ENCODE measurements at regions of chr19 and their contacts with region 1.

Region 1: GRCh38 chr19:18281082-18282020 is at the start of gene JUND:
- DNase-seq: peak; percentile 98 to 99 (median 99)
- ATAC-seq: peak; percentile 77
- H3K4me3 ChIP-seq: peak within 1 kb of the TSS; percentile 91
- H3K4me3 Mint-ChIP-seq: peak within 1 kb of the TSS; percentile 91 to 98 (median 94)
- H3K27ac ChIP-seq: peak within 1 kb of the TSS; percentile 100
- H3K27ac Mint-ChIP-seq: peak within 1 kb of the TSS; percentile 96 to 99 (median 98)
- H3K4me1 ChIP-seq: peaks cover 26 to 45% of the 10 kb centered on the region in 2 donors
- H3K4me1 Mint-ChIP-seq: peaks cover 29 to 56% (median 50%) of the 10 kb centered on the region in 7 donors
- H3K27me3 ChIP-seq: no peaks in the 10 kb centered on the region
- H3K27me3 Mint-ChIP-seq: peaks cover 0 to 9% (median 0%) of the 10 kb centered on the region in 5 donors
- total RNA-seq, gene JUND: 196 to 1,360 (median 279) TPM

Region 2: DNA sequence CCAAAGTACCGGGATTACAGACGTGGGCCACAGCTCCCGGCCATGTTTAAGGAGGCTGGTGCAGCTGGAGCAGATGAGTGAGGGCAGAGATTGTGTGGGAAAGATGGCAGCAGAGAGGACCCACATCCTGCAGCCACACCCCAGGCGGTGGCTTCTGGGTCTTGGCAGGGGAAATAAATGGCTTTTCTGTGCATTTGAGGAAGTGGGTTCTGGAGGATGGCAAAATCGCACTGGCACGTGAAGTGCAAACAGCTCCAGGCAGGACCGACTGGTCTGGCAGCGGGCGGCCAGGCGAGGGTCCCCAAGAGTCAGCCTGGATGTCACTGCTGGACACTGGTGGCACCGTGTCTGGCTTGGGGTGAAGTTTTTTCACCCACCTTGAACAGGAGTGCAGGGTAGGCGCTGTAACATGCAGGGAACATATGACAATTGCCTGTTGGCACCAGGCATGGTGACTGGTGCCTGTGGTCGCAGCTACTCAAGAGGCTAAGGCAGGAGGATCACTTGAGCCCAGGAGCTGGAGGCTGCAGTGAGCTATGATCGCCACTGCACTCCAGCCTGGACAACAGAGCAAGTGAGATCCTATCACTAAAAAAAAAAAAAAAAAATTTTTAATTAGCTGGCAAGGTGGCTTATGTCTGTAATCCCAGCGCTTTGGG is 478.0 kb before region 1 on chr19:
- CTCF ChIA-PET with region 1: no interaction called
- POLR2A ChIA-PET with region 1: no interaction called
- intact Hi-C with region 1: no loop called
- DNase-seq: peak in 6 of 9 donors; percentile 60 to 72 (median 69)
- ATAC-seq: peak; percentile 77
- H3K4me3 ChIP-seq: peak overlapping the region; percentile 38
- H3K4me3 Mint-ChIP-seq: peak overlapping the region; percentile 75 to 88 (median 82)
- H3K27ac ChIP-seq: peak overlapping the region; percentile 25
- H3K27ac Mint-ChIP-seq: peak overlapping the region; percentile 76 to 97 (median 88)
- H3K4me1 ChIP-seq: peaks cover 15 to 34% of the 10 kb centered on the region in 2 donors
- H3K4me1 Mint-ChIP-seq: peaks cover 19 to 55% (median 40%) of the 10 kb centered on the region in 7 donors
- H3K27me3 ChIP-seq: no peaks in the 10 kb centered on the region
- H3K27me3 Mint-ChIP-seq: peaks cover 0 to 12% (median 0%) of the 10 kb centered on the region in 5 donors

Region 3: DNA sequence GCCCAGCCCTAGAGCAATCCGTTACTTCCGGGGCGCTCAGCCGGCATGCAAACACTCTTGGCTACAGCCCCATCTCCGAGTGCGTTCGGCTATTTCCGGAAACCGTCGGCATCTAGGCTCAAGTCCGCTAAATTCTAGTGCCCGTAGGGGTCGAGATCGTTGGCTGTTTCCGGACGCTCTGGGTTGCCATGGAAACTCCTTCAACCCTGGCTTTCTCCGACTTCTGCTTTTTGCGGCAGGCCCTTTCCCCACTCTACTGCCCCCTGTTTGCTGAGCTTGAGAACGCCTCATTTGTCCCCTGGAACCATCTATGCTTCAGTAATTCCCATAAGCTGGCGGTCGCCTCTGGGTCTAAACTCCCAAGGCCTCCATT is 128.9 kb before region 1 on chr19:
- CTCF ChIA-PET with region 1: interaction called, 10 read pairs
- POLR2A ChIA-PET with region 1: interaction called, 12 read pairs
- intact Hi-C with region 1: loop called in 1 of 2 experiments (anchors 1 kb)
- DNase-seq: peak; percentile 92 to 99 (median 97)
- ATAC-seq: peak; percentile 76
- H3K4me3 ChIP-seq: peak overlapping the region; percentile 82
- H3K4me3 Mint-ChIP-seq: peak overlapping the region; percentile 81 to 95 (median 88)
- H3K27ac ChIP-seq: peak overlapping the region; percentile 88
- H3K27ac Mint-ChIP-seq: peak overlapping the region; percentile 89 to 97 (median 95)
- H3K4me1 ChIP-seq: peaks cover 16 to 20% of the 10 kb centered on the region in 2 donors
- H3K4me1 Mint-ChIP-seq: peaks cover 9 to 32% (median 24%) of the 10 kb centered on the region in 7 donors
- H3K27me3 ChIP-seq: no peaks in the 10 kb centered on the region
- H3K27me3 Mint-ChIP-seq: no peaks in the 10 kb centered on the region

Region 4: GRCh38 chr19:18291590-18292461 is 10.5 kb after region 1 on chr19:
- CTCF ChIA-PET with region 1: interaction called, 17 read pairs
- POLR2A ChIA-PET with region 1: interaction called, 216 read pairs
- intact Hi-C with region 1: loop called (anchors 1 kb)
- DNase-seq: peak in 8 of 9 donors; percentile 67 to 93 (median 70)
- ATAC-seq: peak; percentile 62
- H3K4me3 ChIP-seq: peak overlapping the region; percentile 84
- H3K4me3 Mint-ChIP-seq: peak overlapping the region; percentile 80 to 96 (median 92)
- H3K27ac ChIP-seq: peak overlapping the region; percentile 92
- H3K27ac Mint-ChIP-seq: peak overlapping the region; percentile 87 to 100 (median 97)
- H3K4me1 ChIP-seq: peaks cover 41 to 47% of the 10 kb centered on the region in 2 donors
- H3K4me1 Mint-ChIP-seq: peaks cover 38 to 73% (median 58%) of the 10 kb centered on the region in 7 donors
- H3K27me3 ChIP-seq: no peaks in the 10 kb centered on the region
- H3K27me3 Mint-ChIP-seq: no peaks in the 10 kb centered on the region

Region 5: GRCh38 chr19:18304458-18305310 is 23.3 kb after region 1 on chr19:
- CTCF ChIA-PET with region 1: interaction called, 73 read pairs
- POLR2A ChIA-PET with region 1: interaction called, 351 read pairs
- intact Hi-C with region 1: loop called (anchors 1 kb)
- DNase-seq: peak; percentile 47 to 85 (median 57)
- ATAC-seq: peak; percentile 84
- H3K4me3 ChIP-seq: peak overlapping the region; percentile 75
- H3K4me3 Mint-ChIP-seq: peak overlapping the region; percentile 90 to 98 (median 94)
- H3K27ac ChIP-seq: peak overlapping the region; percentile 97
- H3K27ac Mint-ChIP-seq: peak overlapping the region; percentile 95 to 100 (median 98)
- H3K4me1 ChIP-seq: peaks cover 31 to 37% of the 10 kb centered on the region in 2 donors
- H3K4me1 Mint-ChIP-seq: peaks cover 12 to 47% (median 43%) of the 10 kb centered on the region in 7 donors
- H3K27me3 ChIP-seq: no peaks in the 10 kb centered on the region
- H3K27me3 Mint-ChIP-seq: no peaks in the 10 kb centered on the region

Region 6: GRCh38 chr19:18322759-18323460 is 41.6 kb after region 1 on chr19 and contains the start of gene LSM4:
- CTCF ChIA-PET with region 1: interaction called, 266 read pairs
- POLR2A ChIA-PET with region 1: interaction called, 757 read pairs
- intact Hi-C with region 1: loop called (anchors 1 kb)
- DNase-seq: peak; percentile 95 to 100 (median 99)
- ATAC-seq: peak; percentile 98
- H3K4me3 ChIP-seq: peak within 1 kb of the TSS; percentile 86
- H3K4me3 Mint-ChIP-seq: peak within 1 kb of the TSS; percentile 80 to 88 (median 84)
- H3K27ac ChIP-seq: peak within 1 kb of the TSS; percentile 94
- H3K27ac Mint-ChIP-seq: peak within 1 kb of the TSS; percentile 89 to 99 (median 95)
- H3K4me1 ChIP-seq: peaks cover 47 to 55% of the 10 kb centered on the region in 2 donors
- H3K4me1 Mint-ChIP-seq: peaks cover 42 to 58% (median 51%) of the 10 kb centered on the region in 7 donors
- H3K27me3 ChIP-seq: no peaks in the 10 kb centered on the region
- H3K27me3 Mint-ChIP-seq: no peaks in the 10 kb centered on the region
- total RNA-seq, gene LSM4: 45.3 to 131 (median 56.2) TPM

Region 7: DNA sequence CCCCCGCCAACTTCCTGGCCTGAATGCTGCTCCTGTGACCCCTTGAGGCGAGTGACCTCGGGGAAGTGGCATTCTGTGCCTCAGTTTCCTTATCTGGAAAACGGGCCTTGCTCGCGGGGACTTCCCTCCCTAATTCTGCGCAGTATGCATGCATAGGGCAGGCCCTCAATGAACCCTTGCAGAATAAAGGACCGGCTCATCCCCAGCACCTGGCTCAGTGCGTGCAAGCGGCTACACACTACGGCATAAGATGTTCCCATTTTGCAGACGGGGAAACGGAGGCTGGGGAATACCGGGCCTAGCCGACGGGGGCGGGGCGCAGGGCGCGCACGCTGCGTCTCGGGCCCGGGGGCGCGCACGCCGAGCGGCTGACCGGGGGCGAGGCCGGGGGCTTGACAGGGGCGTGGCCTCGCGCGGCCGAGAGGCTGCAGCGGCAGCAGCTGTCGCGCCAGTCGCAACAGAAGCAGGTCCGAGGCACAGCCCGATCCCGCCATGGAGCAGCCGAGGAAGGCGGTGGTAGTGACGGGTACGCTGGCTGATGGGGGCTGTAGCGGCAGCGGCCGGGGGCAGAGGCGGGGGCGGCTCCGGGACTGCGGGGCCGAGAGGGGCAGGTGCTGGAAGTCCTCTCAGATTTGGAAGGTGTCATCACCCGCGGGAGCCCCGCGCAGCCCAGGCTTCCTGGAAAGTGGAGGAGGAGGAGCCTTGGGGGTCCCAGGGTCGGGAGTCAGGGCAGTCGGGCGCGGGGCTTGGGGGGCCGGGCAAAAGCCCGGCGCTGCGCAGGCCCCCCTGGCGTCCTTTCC is 59.0 kb after region 1 on chr19 and contains the start of gene PGPEP1:
- CTCF ChIA-PET with region 1: interaction called, 5 read pairs
- POLR2A ChIA-PET with region 1: interaction called, 59 read pairs
- intact Hi-C with region 1: no loop called
- DNase-seq: peak in 8 of 9 donors; percentile 32 to 80 (median 54)
- ATAC-seq: peak; percentile 81
- H3K4me3 ChIP-seq: peak within 1 kb of the TSS; percentile 66
- H3K4me3 Mint-ChIP-seq: peak within 1 kb of the TSS; percentile 77 to 95 (median 90)
- H3K27ac ChIP-seq: peak within 1 kb of the TSS; percentile 74
- H3K27ac Mint-ChIP-seq: peak within 1 kb of the TSS; percentile 70 to 96 (median 90)
- H3K4me1 ChIP-seq: peaks cover 11 to 13% of the 10 kb centered on the region in 2 donors
- H3K4me1 Mint-ChIP-seq: peaks cover 12 to 25% (median 21%) of the 10 kb centered on the region in 7 donors
- H3K27me3 ChIP-seq: no peaks in the 10 kb centered on the region
- H3K27me3 Mint-ChIP-seq: no peaks in the 10 kb centered on the region
- total RNA-seq, gene PGPEP1: 26.6 to 57.1 (median 43.8) TPM

Region 8: GRCh38 chr19:18951665-18952281 is 670.4 kb after region 1 on chr19:
- CTCF ChIA-PET with region 1: no interaction called
- POLR2A ChIA-PET with region 1: no interaction called
- intact Hi-C with region 1: no loop called
- DNase-seq: no peak
- ATAC-seq: no peak
- H3K4me3 ChIP-seq: no peak overlapping the region
- H3K4me3 Mint-ChIP-seq: no peak overlapping the region
- H3K27ac ChIP-seq: no peak overlapping the region
- H3K27ac Mint-ChIP-seq: no peak overlapping the region
- H3K4me1 ChIP-seq: no peaks in the 10 kb centered on the region
- H3K4me1 Mint-ChIP-seq: peaks cover 0 to 2% (median 0%) of the 10 kb centered on the region in 7 donors
- H3K27me3 ChIP-seq: no peaks in the 10 kb centered on the region
- H3K27me3 Mint-ChIP-seq: no peaks in the 10 kb centered on the region